ENCODE measurements at regions of chr20 and their contacts with region 1.

Region 1: DNA sequence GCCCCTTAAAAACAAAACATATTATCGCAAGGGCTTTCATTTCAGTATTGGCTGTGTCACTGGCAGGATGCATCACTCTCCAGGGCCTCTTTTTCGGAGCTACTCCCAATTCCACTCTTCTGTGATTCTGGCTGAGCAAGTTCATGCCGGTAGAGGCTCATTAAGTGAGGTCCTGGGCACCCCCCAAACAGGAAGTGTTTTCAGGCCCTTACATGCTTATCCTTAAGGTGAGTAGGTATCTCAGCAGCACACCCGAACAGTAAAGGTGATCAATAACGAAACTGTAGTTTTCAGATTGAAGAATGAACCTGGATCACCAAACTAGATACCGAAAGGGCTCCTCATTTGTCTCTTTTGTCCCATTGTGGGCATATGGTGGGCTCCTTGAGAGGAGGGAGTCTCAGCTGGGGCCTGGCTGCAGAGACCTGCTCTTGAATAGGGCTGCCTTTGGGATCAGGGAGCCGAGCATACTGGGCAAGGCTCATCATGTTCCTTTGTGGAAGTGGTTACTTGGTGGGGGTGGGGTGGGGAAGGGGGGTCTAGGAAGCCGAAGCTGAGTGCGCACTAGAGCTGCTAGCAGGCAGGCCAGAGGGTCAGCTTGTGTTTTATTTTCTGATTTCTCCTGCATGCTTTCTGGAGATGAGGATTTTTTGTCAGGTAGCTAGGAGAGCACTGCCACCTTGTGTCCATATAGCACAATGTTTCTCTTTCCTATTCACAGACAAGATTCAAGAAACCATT is 65.2 kb downstream of the CDS2 start:
- DNase-seq: peak; percentile 81 to 89
- ATAC-seq: peak; percentile 72 to 87
- H3K4me3 ChIP-seq: no peak overlapping the region
- H3K27ac ChIP-seq: peak overlapping the region in 1 of 2 experiments; percentile 35; a peak in 1 of 6 replicates
- H3K4me1 ChIP-seq: 0 out of 3 replicates have a peak, but pooled peaks cover 3% of the 10 kb centered on the region
- CTCF ChIP-seq: peak; percentile 96
- EP300 ChIP-seq: no peak
- POLR2A ChIP-seq: no peak
- RAD21 ChIP-seq: peak; percentile 92 to 94

Region 2: GRCh38 chr20:5126512-5127203 is 65.3 kb before region 1 on chr20 and contains the start of gene CDS2:
- CTCF ChIA-PET with region 1: interaction called, 200 read pairs
- POLR2A ChIA-PET with region 1: interaction called, 21 read pairs
- DNase-seq: peak; percentile 98 to 100
- ATAC-seq: peak; percentile 92 to 95
- H3K4me3 ChIP-seq: peak within 1 kb of the TSS; percentile 78
- H3K27ac ChIP-seq: peak within 1 kb of the TSS; percentile 85 to 98
- H3K4me1 ChIP-seq: peaks cover 10% of the 10 kb centered on the region; the same call in 2 of the 3 replicates
- CTCF ChIP-seq: peak; percentile 75
- EP300 ChIP-seq: no peak
- POLR2A ChIP-seq: peak; percentile 74
- RAD21 ChIP-seq: peak; percentile 81 to 87
- polyA plus RNA-seq, gene CDS2: 106 and 128 TPM in 2 replicates

Region 3: GRCh38 chr20:5146871-5147592 is 45.0 kb before region 1 on chr20:
- CTCF ChIA-PET with region 1: interaction called, 14 read pairs
- POLR2A ChIA-PET with region 1: no interaction called
- DNase-seq: no peak
- ATAC-seq: 0 out of 6 replicates have a peak, but pooled peaks of 1 of the 2 experiments have one; percentile 30
- H3K4me3 ChIP-seq: no peak overlapping the region
- H3K27ac ChIP-seq: no peak overlapping the region
- H3K4me1 ChIP-seq: peaks cover 14% of the 10 kb centered on the region
- CTCF ChIP-seq: no peak
- EP300 ChIP-seq: no peak
- POLR2A ChIP-seq: no peak
- RAD21 ChIP-seq: no peak

Region 4: DNA sequence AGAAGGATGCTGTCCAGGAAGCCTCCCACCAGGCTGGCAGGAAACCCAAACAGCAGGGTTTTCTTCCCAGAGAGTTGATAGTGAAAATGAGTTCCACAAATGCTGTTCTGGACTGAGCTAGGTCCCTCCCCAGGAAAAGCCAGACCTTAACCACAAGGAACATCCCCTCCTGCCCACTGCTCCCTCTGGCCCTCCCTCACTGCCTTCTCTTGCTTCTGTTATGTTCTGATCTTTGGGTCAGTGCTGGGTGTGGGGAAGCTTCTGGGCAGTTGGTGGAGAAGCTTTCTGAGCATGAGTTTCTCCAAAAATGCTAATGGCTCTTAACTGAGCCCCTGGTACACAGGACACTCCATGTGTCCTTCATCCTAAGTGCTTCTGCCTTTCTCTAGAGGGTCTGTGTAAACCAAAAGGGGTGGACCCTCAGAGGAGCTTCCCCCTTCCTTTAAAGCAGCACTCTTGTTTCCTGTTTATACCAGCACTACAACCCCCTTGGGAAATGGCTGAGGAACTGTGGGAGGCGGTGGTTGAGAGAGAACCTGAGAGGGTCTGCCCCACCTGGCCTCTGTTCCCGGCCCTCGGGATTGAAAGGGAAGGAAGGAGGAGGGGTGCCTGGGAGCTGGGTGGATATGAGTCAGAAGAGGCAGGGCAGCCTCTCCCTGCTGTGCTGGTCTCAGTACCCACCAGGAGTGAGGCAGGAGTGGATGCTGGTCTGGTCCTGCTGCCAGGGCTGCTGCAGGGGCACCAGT is 23.2 kb before region 1 on chr20:
- CTCF ChIA-PET with region 1: interaction called, 32 read pairs
- POLR2A ChIA-PET with region 1: no interaction called
- DNase-seq: no peak
- ATAC-seq: peak; percentile 69 to 71; a peak in 4 of 6 replicates
- H3K4me3 ChIP-seq: no peak overlapping the region
- H3K27ac ChIP-seq: peak overlapping the region in 1 of 2 experiments; percentile 10; a peak in 2 of 6 replicates
- H3K4me1 ChIP-seq: peaks cover 16% of the 10 kb centered on the region
- CTCF ChIP-seq: no peak
- EP300 ChIP-seq: no peak
- POLR2A ChIP-seq: no peak
- RAD21 ChIP-seq: no peak

Region 5: DNA sequence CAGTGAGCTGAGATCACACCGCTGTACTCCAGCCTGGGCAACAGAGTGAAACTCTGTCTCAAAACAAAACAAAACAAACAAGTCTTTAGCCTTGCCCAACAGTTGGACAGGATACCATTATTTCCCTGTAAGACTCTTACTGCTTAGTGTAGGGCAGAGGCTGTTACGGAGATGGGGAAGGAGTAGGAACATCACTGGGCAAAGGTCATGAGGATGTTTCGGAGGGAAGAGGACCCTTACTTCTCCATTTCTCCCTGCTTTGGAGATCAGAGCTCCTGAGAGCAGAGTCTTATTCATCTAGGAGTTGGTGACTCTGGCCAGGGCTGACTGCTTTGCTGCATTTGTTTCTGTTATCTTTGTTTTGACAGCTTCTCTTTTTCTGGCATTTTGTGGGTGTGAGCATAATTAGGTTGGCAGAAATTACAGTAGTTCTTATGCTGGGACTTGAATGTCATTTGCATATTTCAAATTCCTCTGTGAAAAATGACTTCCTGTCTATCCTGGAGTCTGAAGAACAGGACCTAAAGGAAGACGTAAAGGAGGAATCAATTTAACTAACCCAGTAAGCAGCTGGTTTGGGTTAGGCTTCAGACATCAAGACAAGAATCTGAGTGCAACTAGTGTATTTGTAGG is 23.8 kb after region 1 on chr20:
- CTCF ChIA-PET with region 1: interaction called, 24 read pairs
- POLR2A ChIA-PET with region 1: no interaction called
- DNase-seq: no peak
- ATAC-seq: no peak
- H3K4me3 ChIP-seq: no peak overlapping the region
- H3K27ac ChIP-seq: no peak overlapping the region
- H3K4me1 ChIP-seq: no peaks in the 10 kb centered on the region
- CTCF ChIP-seq: no peak
- EP300 ChIP-seq: no peak
- POLR2A ChIP-seq: no peak
- RAD21 ChIP-seq: no peak

Measured in A549 (cell line).